A673 (cell line): ENCODE measurements at regions of chr7 and their contacts with region 1.

Region 1: GRCh38 chr7:134954197-134955082 is 31.9 kb upstream of the AGBL3 start:
- DNase-seq: peak; percentile 59
- H3K4me3 ChIP-seq: no peak overlapping the region
- H3K27ac ChIP-seq: no peak overlapping the region
- H3K4me1 ChIP-seq: no peaks in the 10 kb centered on the region
- H3K27me3 ChIP-seq: no peaks in the 10 kb centered on the region
- CTCF ChIP-seq: peak; percentile 75

Region 2: GRCh38 chr7:134854816-134855215 is 99.6 kb before region 1 on chr7:
- CTCF ChIA-PET with region 1: no interaction called
- POLR2A ChIA-PET with region 1: no interaction called
- intact Hi-C with region 1: no loop called
- DNase-seq: peak; percentile 93
- H3K4me3 ChIP-seq: no peak overlapping the region
- H3K27ac ChIP-seq: peak overlapping the region; percentile 56
- H3K4me1 ChIP-seq: peaks cover 48% of the 10 kb centered on the region
- H3K27me3 ChIP-seq: no peaks in the 10 kb centered on the region
- CTCF ChIP-seq: no peak

Region 3: GRCh38 chr7:134891262-134891695 is 63.2 kb before region 1 on chr7:
- CTCF ChIA-PET with region 1: interaction called, 11 read pairs
- POLR2A ChIA-PET with region 1: no interaction called
- intact Hi-C with region 1: no loop called
- DNase-seq: peak; percentile 92
- H3K4me3 ChIP-seq: peak overlapping the region; percentile 64
- H3K27ac ChIP-seq: peak overlapping the region; percentile 75
- H3K4me1 ChIP-seq: peaks cover 32% of the 10 kb centered on the region
- H3K27me3 ChIP-seq: no peaks in the 10 kb centered on the region
- CTCF ChIP-seq: no peak